Activated naive CD4-positive, alpha-beta T cell treated with anti-CD3 and anti-CD28 coated beads for 36 hours (primary cell): ENCODE measurements at regions of chr16 and their contacts with region 1.

Region 1: DNA sequence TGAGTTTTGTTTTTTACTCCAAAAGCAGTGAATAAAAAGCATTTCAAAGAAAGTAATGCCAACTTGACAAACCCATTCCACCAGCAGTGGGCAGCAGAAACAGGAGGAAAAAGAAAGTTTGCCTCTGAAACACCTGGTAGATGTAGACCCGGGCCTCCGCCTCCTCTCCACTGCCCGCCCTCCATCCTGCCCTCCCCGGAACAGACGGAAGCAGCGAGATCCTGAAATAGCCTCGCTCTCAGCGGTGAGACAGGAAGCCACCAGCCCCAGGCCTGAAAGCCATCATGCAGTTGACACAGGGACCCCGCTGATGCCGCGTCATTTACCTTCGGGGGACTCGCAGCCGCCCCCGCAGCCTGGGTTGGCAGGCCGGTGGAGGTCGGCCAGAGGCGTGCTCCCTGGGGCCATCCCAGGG is 67.8 kb downstream of the C16orf78 start:
- DNase-seq: peak; percentile 91
- H3K4me3 Mint-ChIP-seq: peak overlapping the region; percentile 48
- H3K27ac Mint-ChIP-seq: no peak overlapping the region
- H3K4me1 Mint-ChIP-seq: peaks cover 23% of the 10 kb centered on the region
- H3K27me3 Mint-ChIP-seq: no peaks in the 10 kb centered on the region

Region 2: GRCh38 chr16:49463529-49463928 is 22.2 kb after region 1 on chr16:
- CTCF ChIA-PET with region 1: interaction called, 5 read pairs
- intact Hi-C with region 1: loop called (anchors 1 kb)
- DNase-seq: peak; percentile 92
- H3K4me3 Mint-ChIP-seq: peak overlapping the region; percentile 7
- H3K27ac Mint-ChIP-seq: peak overlapping the region; percentile 50
- H3K4me1 Mint-ChIP-seq: peaks cover 44% of the 10 kb centered on the region
- H3K27me3 Mint-ChIP-seq: no peaks in the 10 kb centered on the region

Region 3: DNA sequence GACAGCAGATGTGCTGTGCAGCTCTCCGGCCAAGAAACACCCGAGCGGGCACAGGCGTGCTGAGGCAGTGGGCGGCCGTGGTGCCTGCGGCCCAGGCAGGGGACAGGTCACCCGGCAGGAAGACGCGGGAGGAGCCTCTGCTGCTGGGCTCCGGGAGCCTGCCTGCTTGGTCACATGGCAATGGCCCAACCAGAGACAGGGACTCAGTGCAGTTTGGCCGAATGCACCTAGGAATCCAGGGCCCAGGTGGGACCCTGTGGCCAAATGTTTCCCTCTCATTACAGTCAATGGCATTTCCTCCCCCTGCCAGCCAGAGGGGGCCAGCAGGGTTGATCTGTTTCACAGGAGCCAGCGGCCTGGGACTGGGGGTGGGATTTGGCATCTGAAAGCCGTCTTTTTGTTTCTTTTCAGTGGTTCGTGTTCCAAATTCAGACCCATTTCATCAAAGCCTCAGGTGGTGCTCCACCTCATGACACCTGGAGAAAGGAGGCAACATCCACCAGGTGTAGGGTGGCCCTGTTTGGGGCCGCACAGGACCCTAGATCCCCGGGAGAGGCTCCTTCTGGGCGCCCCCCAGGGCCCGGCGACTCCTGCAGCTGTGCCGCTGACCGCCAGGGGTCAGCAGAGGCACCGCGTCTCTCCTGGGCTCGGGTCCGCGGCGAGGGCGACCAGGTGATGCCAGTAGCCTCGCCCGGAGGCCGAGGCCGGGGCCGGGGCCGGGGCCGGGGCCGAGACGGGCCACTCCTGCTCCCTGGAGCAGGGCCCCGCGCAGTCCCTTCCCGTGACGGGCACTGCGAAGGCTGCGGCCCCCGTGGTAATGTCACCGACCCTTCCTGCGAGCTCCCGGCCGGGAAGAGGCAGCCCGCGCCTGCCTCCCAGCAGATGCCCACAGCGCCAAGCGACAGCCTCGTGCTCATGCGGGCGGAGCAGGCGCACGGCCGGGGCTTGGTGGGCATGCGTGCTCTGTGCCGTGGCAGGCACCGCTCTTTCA is 50.7 kb after region 1 on chr16:
- CTCF ChIA-PET with region 1: interaction called, 3 read pairs
- intact Hi-C with region 1: loop called (anchors 1 kb)
- DNase-seq: peak; percentile 37
- H3K4me3 Mint-ChIP-seq: no peak overlapping the region
- H3K27ac Mint-ChIP-seq: no peak overlapping the region
- H3K4me1 Mint-ChIP-seq: no peaks in the 10 kb centered on the region
- H3K27me3 Mint-ChIP-seq: no peaks in the 10 kb centered on the region

Region 4: DNA sequence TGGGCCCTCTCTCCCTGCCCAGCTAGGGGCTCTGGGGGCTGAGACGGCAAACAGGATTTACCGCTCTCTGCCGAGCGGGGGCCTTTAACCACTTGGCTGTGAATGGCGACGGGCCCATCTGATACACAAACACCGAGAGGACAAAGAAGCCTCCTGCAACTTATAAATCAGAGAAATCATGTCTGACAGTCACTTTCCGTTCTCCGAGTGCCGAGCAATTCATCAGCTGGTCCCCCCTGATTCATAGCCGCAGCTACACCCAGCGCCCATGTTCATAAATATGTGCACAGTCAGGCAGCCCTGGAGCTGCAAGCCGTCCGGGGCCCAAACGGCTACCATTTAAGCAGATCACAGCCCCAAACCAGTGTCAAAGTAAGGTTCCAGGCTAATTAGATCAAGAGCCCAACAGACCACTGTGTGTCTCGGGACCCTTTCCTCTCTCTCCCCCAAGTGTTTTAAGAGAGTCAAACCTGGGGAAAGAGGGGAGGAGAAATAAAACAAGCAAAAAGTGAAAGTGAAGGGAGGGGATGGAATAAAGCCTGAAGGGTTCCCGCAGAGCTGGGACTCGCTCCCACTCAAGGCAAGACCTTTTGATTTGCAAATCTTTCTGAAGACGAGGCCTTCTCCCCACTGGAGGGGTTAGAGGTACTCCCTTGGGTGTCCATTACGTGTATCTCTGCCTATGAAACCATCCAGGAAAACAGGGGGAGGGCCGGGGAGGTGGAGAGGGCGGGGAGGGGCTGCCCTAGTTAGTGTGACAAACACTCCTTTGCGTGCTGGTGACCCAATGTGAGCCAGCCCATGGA is 86.9 kb after region 1 on chr16:
- CTCF ChIA-PET with region 1: no interaction called
- intact Hi-C with region 1: loop called (anchors 1 kb)
- DNase-seq: peak; percentile 64
- H3K4me3 Mint-ChIP-seq: peak overlapping the region; percentile 77
- H3K27ac Mint-ChIP-seq: no peak overlapping the region
- H3K4me1 Mint-ChIP-seq: peaks cover 10% of the 10 kb centered on the region
- H3K27me3 Mint-ChIP-seq: no peaks in the 10 kb centered on the region

Region 5: DNA sequence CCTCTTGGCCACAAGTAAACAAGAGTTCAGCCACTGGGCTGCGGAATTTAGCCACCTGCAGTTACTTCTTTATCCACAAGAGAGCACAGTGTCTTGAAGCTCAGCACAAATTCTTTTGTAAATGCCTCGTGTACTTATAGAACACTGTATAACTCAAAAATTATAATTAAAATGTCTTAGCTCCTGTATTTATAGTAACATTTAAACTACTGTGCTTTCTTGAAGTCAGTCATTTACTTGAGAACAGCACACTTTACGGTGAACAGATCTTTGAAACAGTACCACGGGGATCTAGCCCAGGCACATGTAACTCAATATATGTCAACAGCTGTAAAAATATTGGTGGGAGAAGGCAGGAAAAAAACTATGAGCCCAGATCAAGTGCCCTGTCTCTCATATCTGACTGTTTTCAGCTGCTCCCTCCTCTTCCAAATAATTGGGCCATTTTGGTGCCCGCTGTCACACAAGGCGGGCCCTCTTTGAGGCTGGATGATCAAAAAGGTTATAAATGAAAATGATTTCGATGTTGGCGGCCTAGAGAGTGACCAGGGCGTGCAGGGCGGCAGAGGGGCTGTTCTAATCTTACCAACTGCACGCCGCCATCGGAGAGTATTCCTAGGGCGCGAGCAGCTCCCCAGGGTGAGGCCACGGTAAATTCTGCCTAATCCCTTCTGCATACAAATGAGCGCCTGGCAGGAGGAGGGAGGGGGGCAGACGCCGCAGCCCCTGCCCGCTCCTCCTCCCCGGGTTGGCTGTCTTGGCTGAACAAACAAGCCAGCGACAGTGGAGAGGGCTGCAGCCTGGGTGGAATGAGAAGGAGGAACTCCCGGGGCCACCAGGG is 115.5 kb after region 1 on chr16:
- CTCF ChIA-PET with region 1: no interaction called
- intact Hi-C with region 1: no loop called
- DNase-seq: no peak
- H3K4me3 Mint-ChIP-seq: no peak overlapping the region
- H3K27ac Mint-ChIP-seq: no peak overlapping the region
- H3K4me1 Mint-ChIP-seq: no peaks in the 10 kb centered on the region
- H3K27me3 Mint-ChIP-seq: no peaks in the 10 kb centered on the region

Region 6: DNA sequence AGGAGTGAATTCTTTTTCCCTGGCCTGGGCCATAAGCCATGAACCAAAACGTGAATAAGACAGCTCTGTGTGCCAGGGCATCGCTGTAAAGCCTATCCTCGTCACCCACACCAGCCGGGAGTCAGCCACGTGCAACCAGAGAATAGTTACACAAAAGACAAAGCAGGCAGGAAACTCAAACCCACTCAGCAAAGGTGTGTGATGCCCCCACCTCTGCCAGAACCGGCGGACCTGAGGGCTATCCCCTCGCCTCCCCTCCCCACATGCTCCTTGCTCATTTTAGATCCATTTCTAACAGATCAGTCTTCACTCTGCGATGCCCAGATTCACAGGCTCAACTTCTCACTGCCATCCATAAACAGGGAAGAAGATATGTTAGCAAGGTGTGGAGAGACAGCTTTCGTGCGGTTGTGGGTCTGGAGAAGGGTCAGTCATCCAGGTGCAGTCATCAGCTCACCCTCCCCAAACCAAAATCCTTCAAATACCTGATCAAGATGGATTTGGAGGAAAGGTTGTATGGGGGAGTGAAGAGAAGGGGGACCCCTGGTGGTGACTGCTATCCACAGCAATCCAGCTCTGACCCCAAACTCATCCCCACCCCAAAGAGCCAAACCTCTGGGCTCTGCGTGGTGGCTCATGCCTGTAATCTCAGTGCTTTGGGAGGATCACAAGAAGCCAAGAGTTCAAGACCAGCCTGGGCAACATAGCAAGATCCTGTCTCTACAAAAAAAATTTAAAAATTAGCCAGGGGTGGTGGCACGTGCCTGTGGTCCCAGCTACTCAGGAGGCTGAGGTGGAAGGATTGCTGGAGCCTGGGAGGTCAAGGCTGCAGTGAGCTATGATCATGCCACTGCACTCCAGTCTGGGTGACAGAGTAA is 151.4 kb after region 1 on chr16:
- CTCF ChIA-PET with region 1: interaction called, 4 read pairs
- intact Hi-C with region 1: loop called (anchors 1 kb)
- DNase-seq: peak; percentile 58
- H3K4me3 Mint-ChIP-seq: no peak overlapping the region
- H3K27ac Mint-ChIP-seq: no peak overlapping the region
- H3K4me1 Mint-ChIP-seq: peaks cover 15% of the 10 kb centered on the region
- H3K27me3 Mint-ChIP-seq: no peaks in the 10 kb centered on the region

Region 7: DNA sequence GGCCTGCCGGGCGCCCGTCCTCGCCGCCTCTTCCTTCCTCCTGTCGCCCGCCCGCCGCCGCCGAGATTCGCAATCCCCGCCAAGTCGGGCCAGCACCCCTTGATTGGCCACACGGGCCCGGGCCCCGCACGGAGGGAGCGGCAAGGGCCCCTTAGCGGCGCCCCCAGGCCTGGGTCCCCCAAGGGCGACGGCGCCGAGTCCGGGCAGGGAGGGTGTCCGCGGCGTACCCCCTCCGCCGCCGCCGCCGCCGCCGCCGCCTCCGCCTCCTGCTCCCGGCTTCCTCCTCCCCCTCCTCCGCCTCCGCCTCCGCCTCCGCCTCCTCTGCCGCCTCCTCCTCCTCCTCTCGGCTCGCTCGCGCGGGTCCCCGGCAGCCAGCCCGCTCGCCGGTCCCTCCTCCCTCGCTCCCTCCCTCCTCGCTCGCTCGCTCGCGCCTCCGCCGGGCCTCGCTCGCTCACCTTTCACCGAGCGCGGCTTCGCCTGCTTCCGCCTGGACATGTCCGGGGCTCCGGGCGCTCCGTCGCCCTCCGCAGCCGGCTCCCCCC is 414.0 kb after region 1 on chr16:
- CTCF ChIA-PET with region 1: no interaction called
- intact Hi-C with region 1: loop called (anchors 5 kb)
- DNase-seq: peak; percentile 69
- H3K4me3 Mint-ChIP-seq: peak overlapping the region; percentile 58
- H3K27ac Mint-ChIP-seq: no peak overlapping the region
- H3K4me1 Mint-ChIP-seq: peaks cover 10% of the 10 kb centered on the region
- H3K27me3 Mint-ChIP-seq: peaks cover 40% of the 10 kb centered on the region

Region 8: GRCh38 chr16:49921791-49922456 is 480.6 kb after region 1 on chr16:
- CTCF ChIA-PET with region 1: no interaction called
- intact Hi-C with region 1: loop called (anchors 5 kb)
- DNase-seq: peak; percentile 70
- H3K4me3 Mint-ChIP-seq: no peak overlapping the region
- H3K27ac Mint-ChIP-seq: no peak overlapping the region
- H3K4me1 Mint-ChIP-seq: no peaks in the 10 kb centered on the region
- H3K27me3 Mint-ChIP-seq: peaks cover 3% of the 10 kb centered on the region